Panc1 (cell line): ENCODE measurements at regions of chr1 and their contacts with region 1.

Region 1: GRCh38 chr1:154558575-154559465 is at the start of gene UBE2Q1:
- DNase-seq: peak; percentile 91
- ATAC-seq: peak; percentile 96
- H3K4me3 ChIP-seq: peak within 1 kb of the TSS; percentile 81 to 98
- H3K27ac ChIP-seq: peak within 1 kb of the TSS; percentile 91
- H3K4me1 ChIP-seq: peaks cover 14% of the 10 kb centered on the region
- H3K27me3 ChIP-seq: no peaks in the 10 kb centered on the region
- CTCF ChIP-seq: no peak
- total RNA-seq, gene UBE2Q1: 96.0 TPM

Region 2: DNA sequence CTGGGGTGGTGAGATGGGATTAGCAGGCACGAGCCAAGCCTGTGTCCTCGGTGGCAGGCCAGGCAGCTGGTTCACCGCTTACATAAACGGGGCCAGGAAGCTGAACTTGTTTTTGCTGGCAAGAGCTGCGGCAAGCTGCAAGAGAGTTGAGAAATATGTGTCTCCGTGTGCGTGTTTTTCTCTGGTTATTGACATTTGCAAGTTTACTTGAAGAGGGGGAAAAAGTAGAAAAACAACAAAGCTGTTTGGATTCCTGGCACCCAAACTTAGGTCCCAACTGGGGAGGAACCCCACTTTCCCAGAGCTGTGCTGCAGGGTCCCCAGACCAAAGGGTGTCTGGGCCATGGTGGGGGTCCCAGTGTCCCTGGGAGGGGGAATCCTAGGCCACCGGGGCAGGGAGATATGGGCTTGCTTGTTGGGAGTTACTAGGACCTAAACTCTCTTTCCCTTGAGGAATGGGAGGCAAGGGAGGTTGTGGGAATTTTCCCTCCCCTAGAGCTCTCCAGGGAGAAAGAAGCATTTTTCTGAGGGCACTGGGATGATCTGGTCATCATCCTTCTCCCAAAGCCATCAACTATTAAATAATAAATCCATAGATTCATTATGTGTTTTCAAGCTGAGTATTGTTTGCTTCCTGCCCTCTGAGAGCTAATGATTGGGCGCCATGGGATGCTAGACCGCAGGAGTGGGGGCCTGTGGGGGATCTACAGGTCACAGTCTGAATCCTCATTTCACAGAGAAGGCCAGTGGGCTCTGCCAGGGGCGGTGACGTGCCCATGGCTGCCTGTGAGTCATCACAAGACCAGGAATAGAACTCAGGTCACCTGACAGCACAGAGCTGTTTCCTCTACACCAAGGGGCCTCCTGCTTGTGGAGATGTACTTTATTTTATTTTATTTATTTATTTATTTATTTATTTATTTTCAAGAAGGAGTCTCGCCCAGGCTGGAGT is 138.9 kb before region 1 on chr1:
- CTCF ChIA-PET with region 1: no interaction called
- POLR2A ChIA-PET with region 1: no interaction called
- in situ Hi-C with region 1: no loop called
- intact Hi-C with region 1: no loop called
- DNase-seq: peak; percentile 75
- ATAC-seq: peak; percentile 31; the same call in 1 of the 2 replicates
- H3K4me3 ChIP-seq: peak overlapping the region in 1 of 2 experiments; percentile 33; a peak in 2 of 4 replicates
- H3K27ac ChIP-seq: peak overlapping the region; percentile 89
- H3K4me1 ChIP-seq: peaks cover 66% of the 10 kb centered on the region
- H3K27me3 ChIP-seq: no peaks in the 10 kb centered on the region
- CTCF ChIP-seq: no peak

Region 3: GRCh38 chr1:154607609-154608396 is 49.0 kb after region 1 on chr1 and contains the start of gene ADAR:
- CTCF ChIA-PET with region 1: interaction called, 10 read pairs
- POLR2A ChIA-PET with region 1: no interaction called
- in situ Hi-C with region 1: no loop called
- intact Hi-C with region 1: no loop called
- DNase-seq: no peak
- ATAC-seq: peak; percentile 88
- H3K4me3 ChIP-seq: peak within 1 kb of the TSS; percentile 73 to 94
- H3K27ac ChIP-seq: peak within 1 kb of the TSS; percentile 96
- H3K4me1 ChIP-seq: peaks cover 40% of the 10 kb centered on the region
- H3K27me3 ChIP-seq: no peaks in the 10 kb centered on the region
- CTCF ChIP-seq: no peak; the same call in 1 of the 2 replicates
- total RNA-seq, gene ADAR: 136 TPM

Region 4: GRCh38 chr1:154747740-154748404 is 189.1 kb after region 1 on chr1:
- CTCF ChIA-PET with region 1: no interaction called
- POLR2A ChIA-PET with region 1: no interaction called
- in situ Hi-C with region 1: no loop called
- intact Hi-C with region 1: loop called (anchors 10 kb)
- DNase-seq: no peak
- ATAC-seq: no peak
- H3K4me3 ChIP-seq: no peak overlapping the region
- H3K27ac ChIP-seq: no peak overlapping the region
- H3K4me1 ChIP-seq: no peaks in the 10 kb centered on the region
- H3K27me3 ChIP-seq: peaks cover 9% of the 10 kb centered on the region
- CTCF ChIP-seq: no peak

Region 5: GRCh38 chr1:154863315-154864174 is 304.7 kb after region 1 on chr1:
- CTCF ChIA-PET with region 1: no interaction called
- POLR2A ChIA-PET with region 1: no interaction called
- in situ Hi-C with region 1: no loop called
- intact Hi-C with region 1: loop called (anchors 10 kb)
- DNase-seq: peak; percentile 41
- ATAC-seq: peak; percentile 65
- H3K4me3 ChIP-seq: no peak overlapping the region
- H3K27ac ChIP-seq: no peak overlapping the region
- H3K4me1 ChIP-seq: no peaks in the 10 kb centered on the region; the same call in 1 of the 2 replicates
- H3K27me3 ChIP-seq: peaks cover 2% of the 10 kb centered on the region; the same call in 1 of the 2 replicates
- CTCF ChIP-seq: peak; percentile 87

Region 6: DNA sequence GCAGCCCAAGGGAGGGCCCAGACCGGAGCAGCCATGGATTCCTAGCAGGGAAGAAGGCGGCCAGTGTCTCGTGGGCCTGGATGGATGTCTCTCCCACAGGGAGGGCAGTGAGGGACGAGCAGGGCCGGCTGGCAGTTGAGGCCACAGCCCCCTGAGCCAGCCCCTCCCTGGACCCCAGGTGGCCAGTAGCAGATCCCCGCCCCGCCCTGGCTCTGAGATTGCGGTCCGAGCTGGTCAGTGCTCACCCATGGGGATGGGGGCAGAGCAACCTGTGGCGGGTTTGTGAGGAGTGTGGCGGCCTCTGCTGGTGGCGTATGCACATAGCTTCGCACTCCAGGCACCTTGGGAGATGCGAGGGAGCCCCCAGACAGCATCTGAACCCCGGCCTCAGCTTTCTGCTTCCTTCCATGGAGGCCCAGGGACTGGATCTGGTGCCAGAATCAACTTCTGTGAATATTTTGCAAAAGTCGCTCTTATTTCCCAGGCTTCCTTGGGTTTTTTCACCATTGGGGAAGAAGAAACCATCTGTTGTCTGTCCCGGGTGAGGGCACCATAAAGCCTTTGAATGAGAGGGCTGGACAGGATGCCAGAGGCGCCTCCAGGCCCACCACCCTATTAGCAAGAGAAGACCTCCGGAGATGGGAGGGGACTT is 319.7 kb after region 1 on chr1:
- CTCF ChIA-PET with region 1: interaction called, 11 read pairs
- POLR2A ChIA-PET with region 1: no interaction called
- in situ Hi-C with region 1: no loop called
- intact Hi-C with region 1: no loop called
- DNase-seq: peak; percentile 42
- ATAC-seq: peak; percentile 96
- H3K4me3 ChIP-seq: no peak overlapping the region
- H3K27ac ChIP-seq: no peak overlapping the region
- H3K4me1 ChIP-seq: peaks cover 7% of the 10 kb centered on the region; the same call in 1 of the 2 replicates
- H3K27me3 ChIP-seq: peaks cover 3% of the 10 kb centered on the region; the same call in 1 of the 2 replicates
- CTCF ChIP-seq: peak; percentile 93

Region 7: GRCh38 chr1:154955718-154956543 is 397.1 kb after region 1 on chr1 and contains the start of gene PBXIP1:
- CTCF ChIA-PET with region 1: no interaction called
- POLR2A ChIA-PET with region 1: no interaction called
- in situ Hi-C with region 1: no loop called
- intact Hi-C with region 1: loop called (anchors 10 kb)
- DNase-seq: no peak
- ATAC-seq: peak; percentile 90
- H3K4me3 ChIP-seq: peak within 1 kb of the TSS; percentile 78 to 93
- H3K27ac ChIP-seq: peak within 1 kb of the TSS; percentile 83
- H3K4me1 ChIP-seq: peaks cover 32% of the 10 kb centered on the region
- H3K27me3 ChIP-seq: no peaks in the 10 kb centered on the region
- CTCF ChIP-seq: no peak
- total RNA-seq, gene PBXIP1: 40.7 TPM